Right ventricle myocardium inferior (tissue), 1 donor: ENCODE measurements at regions of chr21 and their contacts with region 1.

Region 1: GRCh38 chr21:26715878-26716506 is 129.2 kb downstream of the ADAMTS1 start:
- DNase-seq: no peak
- ATAC-seq: peak; percentile 50

Region 2: DNA sequence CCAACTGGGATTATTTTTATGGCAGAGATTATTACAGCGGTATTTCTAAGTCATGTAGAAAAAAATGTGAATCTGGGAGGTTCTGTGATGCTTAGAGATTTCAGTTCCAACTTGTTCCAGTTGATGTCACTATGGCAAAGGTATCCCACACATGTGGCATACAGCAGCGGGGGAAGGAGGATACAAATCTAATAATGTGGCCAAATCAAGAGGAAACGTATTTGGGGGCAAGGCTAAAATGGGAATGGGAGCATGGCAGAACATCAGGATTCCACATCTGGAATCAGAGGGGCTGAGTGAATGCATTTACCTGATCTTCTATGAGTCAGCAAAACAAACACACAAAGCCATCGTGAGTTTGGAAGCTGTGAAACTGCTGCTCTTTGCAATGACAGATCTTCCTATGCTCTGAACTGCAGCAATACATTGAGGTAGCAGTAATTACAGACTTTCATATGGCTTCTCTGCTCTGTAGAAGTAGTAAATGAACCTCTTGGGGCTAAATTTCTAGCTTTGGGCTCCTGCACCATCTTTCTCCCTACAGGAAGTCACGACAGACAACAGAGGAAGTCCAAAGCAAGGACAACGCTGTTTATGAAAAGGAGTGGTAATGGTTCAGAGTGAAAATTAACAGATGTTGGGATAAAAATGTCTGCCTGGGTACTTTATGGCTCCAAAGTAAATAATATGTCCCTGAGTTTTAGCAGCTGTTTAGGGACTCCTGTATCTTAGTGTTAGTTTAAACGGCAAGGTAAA is 925.7 kb before region 1 on chr21:
- intact Hi-C with region 1: loop called (anchors 5 kb)
- DNase-seq: no peak
- ATAC-seq: peak; percentile 57

Region 3: GRCh38 chr21:25881525-25882376 is 834.2 kb before region 1 on chr21:
- intact Hi-C with region 1: loop called (anchors 2 kb)
- DNase-seq: peak; percentile 82
- ATAC-seq: peak; percentile 76

Region 4: DNA sequence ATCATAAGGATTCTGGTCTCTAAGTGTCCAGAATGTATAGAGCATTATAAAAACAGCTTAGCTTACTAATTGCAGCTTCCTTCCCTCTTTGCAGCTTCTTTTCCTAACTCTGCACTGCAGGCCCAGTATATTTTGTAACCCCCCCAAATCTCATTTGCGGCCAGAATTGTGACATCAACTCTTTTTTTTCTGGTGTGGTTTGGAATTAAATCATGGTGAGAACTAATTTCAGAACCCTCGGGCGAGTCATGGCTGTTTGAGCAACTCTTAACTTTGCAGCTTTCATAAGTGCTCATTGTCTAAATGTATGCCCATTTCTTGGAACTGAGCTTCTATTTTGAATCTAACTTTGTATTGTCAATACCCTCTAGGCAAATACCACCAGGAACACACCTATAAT is 330.3 kb before region 1 on chr21:
- intact Hi-C with region 1: no loop called
- DNase-seq: no peak
- ATAC-seq: no peak

Region 5: GRCh38 chr21:26572702-26573381 is 143.2 kb before region 1 on chr21 and contains the start of gene CYYR1:
- intact Hi-C with region 1: loop called (anchors 10 kb)
- DNase-seq: peak; percentile 72
- ATAC-seq: peak; percentile 23
- total RNA-seq, gene CYYR1: 27.3 TPM